Activated CD4-positive, alpha-beta memory T cell treated with anti-CD3 and anti-CD28 coated beads for 36 hours (primary cell): ENCODE measurements at regions of chr2 and their contacts with region 1.

Region 1: GRCh38 chr2:203327901-203328759 is at the start of gene ABI2:
- DNase-seq: peak; percentile 76
- H3K4me3 Mint-ChIP-seq: peak within 1 kb of the TSS; percentile 86
- H3K27ac Mint-ChIP-seq: peak within 1 kb of the TSS; percentile 79
- H3K4me1 Mint-ChIP-seq: peaks cover 33% of the 10 kb centered on the region
- H3K27me3 Mint-ChIP-seq: no peaks in the 10 kb centered on the region
- total RNA-seq, gene ABI2: 43.7 to 51.2 TPM

Region 2: GRCh38 chr2:203014456-203015199 is 313.5 kb before region 1 on chr2 and contains the start of gene NBEAL1:
- CTCF ChIA-PET with region 1: no interaction called
- POLR2A ChIA-PET with region 1: no interaction called
- intact Hi-C with region 1: loop called (anchors 10 kb)
- DNase-seq: peak; percentile 98
- H3K4me3 Mint-ChIP-seq: peak within 1 kb of the TSS; percentile 94
- H3K27ac Mint-ChIP-seq: peak within 1 kb of the TSS; percentile 90
- H3K4me1 Mint-ChIP-seq: peaks cover 31% of the 10 kb centered on the region
- H3K27me3 Mint-ChIP-seq: no peaks in the 10 kb centered on the region
- total RNA-seq, gene NBEAL1: 10.6 to 11.6 TPM